ENCODE measurements at regions of chr12 and their contacts with region 1.

Region 1: GRCh38 chr12:46303039-46303666 is 34.3 kb upstream of the SLC38A1 start:
- DNase-seq: peak; percentile 59
- ATAC-seq: peak; percentile 74
- H3K4me3 Mint-ChIP-seq: no peak overlapping the region
- H3K27ac Mint-ChIP-seq: no peak overlapping the region
- H3K4me1 Mint-ChIP-seq: peaks cover 7% of the 10 kb centered on the region
- H3K27me3 Mint-ChIP-seq: no peaks in the 10 kb centered on the region
- CTCF ChIP-seq: peak; percentile 95

Region 2: DNA sequence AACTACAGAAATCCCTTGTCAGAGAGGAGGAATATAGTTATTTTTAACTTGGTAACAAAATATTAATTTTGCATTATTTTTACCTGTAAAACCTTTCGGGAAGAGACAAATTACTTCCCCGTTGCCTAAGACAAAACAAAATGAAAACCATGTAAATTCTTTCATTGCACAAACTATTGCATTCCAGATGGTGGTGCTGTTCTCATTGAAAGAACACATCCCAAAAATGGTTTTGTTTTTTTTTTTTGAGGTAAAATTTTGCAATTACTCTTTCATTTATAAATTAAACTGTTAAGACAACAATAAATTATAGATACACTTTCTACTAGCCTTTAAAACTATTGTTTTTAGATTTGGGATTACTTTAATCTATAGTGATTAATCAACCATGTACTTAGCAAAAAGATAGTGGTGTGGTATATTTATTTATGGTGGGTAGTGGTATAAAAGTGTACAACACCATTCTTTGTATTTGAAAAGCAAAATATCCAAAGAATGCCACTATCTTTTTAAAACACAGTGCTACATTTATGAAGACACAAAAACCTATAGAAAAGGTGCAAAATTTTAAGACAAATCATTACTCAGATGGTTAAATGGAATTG is 149.8 kb before region 1 on chr12:
- CTCF ChIA-PET with region 1: interaction called, 22 read pairs
- POLR2A ChIA-PET with region 1: no interaction called
- intact Hi-C with region 1: no loop called
- DNase-seq: no peak
- ATAC-seq: peak; percentile 39
- H3K4me3 Mint-ChIP-seq: no peak overlapping the region
- H3K27ac Mint-ChIP-seq: no peak overlapping the region
- H3K4me1 Mint-ChIP-seq: peaks cover 15% of the 10 kb centered on the region
- H3K27me3 Mint-ChIP-seq: peaks cover 1% of the 10 kb centered on the region
- CTCF ChIP-seq: peak; percentile 85

Region 3: DNA sequence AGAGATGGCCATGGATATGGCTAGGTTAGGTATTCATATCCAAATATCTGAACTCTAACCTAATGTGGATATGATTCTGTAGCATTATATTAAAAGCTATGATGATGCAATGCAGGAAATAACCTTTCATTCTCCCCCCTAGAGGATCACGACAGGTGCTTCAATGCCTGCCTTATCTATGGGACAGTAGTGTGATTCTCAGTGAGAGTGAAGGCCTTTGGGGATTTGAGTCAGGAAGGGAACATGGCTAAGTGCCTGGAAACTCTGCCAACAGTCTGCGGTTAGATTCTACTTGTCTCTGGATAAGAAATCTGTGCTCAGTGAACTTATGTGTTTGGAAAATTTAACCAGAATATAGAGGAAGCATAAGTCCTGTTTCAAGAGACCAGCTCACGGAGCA is 116.1 kb before region 1 on chr12:
- CTCF ChIA-PET with region 1: no interaction called
- POLR2A ChIA-PET with region 1: no interaction called
- intact Hi-C with region 1: no loop called
- DNase-seq: no peak
- ATAC-seq: no peak
- H3K4me3 Mint-ChIP-seq: no peak overlapping the region
- H3K27ac Mint-ChIP-seq: peak overlapping the region; percentile 18
- H3K4me1 Mint-ChIP-seq: peaks cover 21% of the 10 kb centered on the region
- H3K27me3 Mint-ChIP-seq: no peaks in the 10 kb centered on the region
- CTCF ChIP-seq: no peak

Region 4: DNA sequence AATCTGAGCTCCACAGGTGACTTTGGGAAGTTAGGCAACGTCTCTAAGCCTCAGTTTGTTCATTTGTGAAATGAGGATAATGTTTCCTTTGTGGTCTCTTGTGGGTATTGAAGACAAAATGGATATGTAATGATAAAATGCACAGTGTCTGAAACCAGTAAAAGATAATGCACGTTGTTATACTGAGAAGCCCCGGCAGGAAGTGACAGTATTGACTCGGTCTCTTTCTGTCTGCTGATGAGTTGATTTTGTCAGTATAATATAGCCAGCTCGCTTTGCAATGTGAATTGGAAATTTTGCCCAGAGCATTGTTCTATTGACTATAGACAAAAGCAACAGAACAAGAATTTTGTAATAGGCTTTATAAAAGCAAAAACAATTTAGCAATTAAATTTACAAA is 14.9 kb after region 1 on chr12:
- CTCF ChIA-PET with region 1: interaction called, 26 read pairs
- POLR2A ChIA-PET with region 1: no interaction called
- intact Hi-C with region 1: no loop called
- DNase-seq: no peak
- ATAC-seq: no peak
- H3K4me3 Mint-ChIP-seq: no peak overlapping the region
- H3K27ac Mint-ChIP-seq: no peak overlapping the region
- H3K4me1 Mint-ChIP-seq: no peaks in the 10 kb centered on the region
- H3K27me3 Mint-ChIP-seq: peaks cover 2% of the 10 kb centered on the region
- CTCF ChIP-seq: no peak

Region 5: DNA sequence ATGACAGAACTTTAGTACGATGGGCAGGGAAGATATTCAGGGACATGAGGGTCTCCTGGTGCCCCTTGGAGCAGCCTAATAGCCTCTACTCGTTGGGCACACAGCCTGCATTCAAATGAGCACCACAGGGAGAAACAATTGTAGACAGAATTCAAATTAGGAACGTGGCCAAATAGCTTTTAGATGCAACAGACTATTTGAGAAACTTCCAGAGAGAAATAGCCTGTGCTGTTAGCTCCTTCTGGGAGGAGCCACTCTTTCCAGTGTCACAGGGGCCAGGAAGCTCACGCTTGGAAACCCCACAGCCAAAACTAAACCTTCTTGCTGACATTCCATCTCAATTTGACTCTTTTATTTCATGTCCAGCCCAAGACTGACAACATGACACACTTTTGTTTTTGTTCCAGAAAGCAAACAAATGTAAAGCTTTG is 1288.2 kb after region 1 on chr12:
- CTCF ChIA-PET with region 1: no interaction called
- POLR2A ChIA-PET with region 1: no interaction called
- intact Hi-C with region 1: no loop called
- DNase-seq: no peak
- ATAC-seq: no peak
- H3K4me3 Mint-ChIP-seq: no peak overlapping the region
- H3K27ac Mint-ChIP-seq: no peak overlapping the region
- H3K4me1 Mint-ChIP-seq: peaks cover 5% of the 10 kb centered on the region
- H3K27me3 Mint-ChIP-seq: peaks cover 1% of the 10 kb centered on the region
- CTCF ChIP-seq: no peak

Measured in activated CD8-positive, alpha-beta T cell treated with anti-CD3 and anti-CD28 coated beads for 36 hours (primary cell).